Common myeloid progenitor, CD34-positive (primary cell): ENCODE measurements at regions of chr4 and their contacts with region 1.

Region 1: GRCh38 chr4:102826890-102827673 is at the start of gene UBE2D3:
- DNase-seq: peak; percentile 98 to 99 (median 98)
- H3K4me3 ChIP-seq: peak within 1 kb of the TSS; percentile 89 to 100 (median 98)
- H3K27ac ChIP-seq: peak within 1 kb of the TSS; percentile 99 to 100
- H3K4me1 ChIP-seq: peaks cover 22 to 42% (median 35%) of the 10 kb centered on the region in 4 experiments
- H3K27me3 ChIP-seq: no peaks in the 10 kb centered on the region

Region 2: GRCh38 chr4:102760645-102761295 is 66.3 kb before region 1 on chr4 and contains the start of gene MANBA:
- CTCF ChIA-PET with region 1: interaction called, 3 read pairs
- POLR2A ChIA-PET with region 1: interaction called, 21 read pairs
- DNase-seq: peak; percentile 83 to 94 (median 92)
- H3K4me3 ChIP-seq: peak within 1 kb of the TSS; percentile 81 to 99 (median 90)
- H3K27ac ChIP-seq: peak within 1 kb of the TSS; percentile 89 to 95
- H3K4me1 ChIP-seq: peaks cover 12 to 38% (median 25%) of the 10 kb centered on the region in 4 experiments
- H3K27me3 ChIP-seq: no peaks in the 10 kb centered on the region

Region 3: GRCh38 chr4:102807345-102807744 is 19.7 kb before region 1 on chr4:
- CTCF ChIA-PET with region 1: interaction called, 10 read pairs
- POLR2A ChIA-PET with region 1: interaction called, 7 read pairs
- DNase-seq: no peak
- H3K4me3 ChIP-seq: no peak overlapping the region
- H3K27ac ChIP-seq: no peak overlapping the region
- H3K4me1 ChIP-seq: peaks cover 0 to 15% (median 3%) of the 10 kb centered on the region in 4 experiments
- H3K27me3 ChIP-seq: no peaks in the 10 kb centered on the region

Region 4: GRCh38 chr4:102815981-102816380 is 11.1 kb before region 1 on chr4:
- CTCF ChIA-PET with region 1: interaction called, 10 read pairs
- POLR2A ChIA-PET with region 1: interaction called, 15 read pairs
- DNase-seq: no peak
- H3K4me3 ChIP-seq: no peak overlapping the region
- H3K27ac ChIP-seq: no peak overlapping the region
- H3K4me1 ChIP-seq: peaks cover 8 to 33% (median 12%) of the 10 kb centered on the region in 4 experiments
- H3K27me3 ChIP-seq: no peaks in the 10 kb centered on the region

Region 5: DNA sequence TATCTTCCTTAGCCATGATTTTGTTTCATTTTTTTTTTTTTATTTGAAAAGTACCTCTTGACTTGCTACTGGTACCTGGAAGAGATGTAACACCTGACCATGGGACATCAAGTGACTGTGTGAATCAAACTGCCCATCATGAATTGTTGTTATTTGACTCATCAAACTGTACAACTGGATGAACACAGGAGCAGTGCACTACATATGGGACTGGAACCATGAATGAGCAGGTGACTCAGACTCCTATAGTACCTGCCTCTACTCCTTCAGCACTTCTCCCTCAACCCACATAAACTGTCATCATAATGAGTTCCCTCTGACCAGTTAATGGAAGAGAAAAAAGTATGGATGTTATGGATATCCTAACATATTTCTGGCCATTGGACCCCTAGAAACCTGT is 16.2 kb after region 1 on chr4:
- CTCF ChIA-PET with region 1: interaction called, 13 read pairs
- POLR2A ChIA-PET with region 1: interaction called, 4 read pairs
- DNase-seq: no peak
- H3K4me3 ChIP-seq: no peak overlapping the region
- H3K27ac ChIP-seq: no peak overlapping the region
- H3K4me1 ChIP-seq: no peaks in the 10 kb centered on the region
- H3K27me3 ChIP-seq: no peaks in the 10 kb centered on the region

Region 6: GRCh38 chr4:102868781-102869568 is 41.9 kb after region 1 on chr4 and contains the start of gene CISD2:
- CTCF ChIA-PET with region 1: interaction called, 9 read pairs
- POLR2A ChIA-PET with region 1: interaction called, 72 read pairs
- DNase-seq: peak; percentile 97 to 98 (median 98)
- H3K4me3 ChIP-seq: peak within 1 kb of the TSS; percentile 71 to 92 (median 82)
- H3K27ac ChIP-seq: peak within 1 kb of the TSS; percentile 95 to 98
- H3K4me1 ChIP-seq: peaks cover 25 to 65% (median 43%) of the 10 kb centered on the region in 4 experiments
- H3K27me3 ChIP-seq: no peaks in the 10 kb centered on the region